ENCODE measurements at regions of chrX and their contacts with region 1.

Region 1: GRCh38 chrX:21166302-21166982 is 207.8 kb upstream of the CNKSR2 start:
- DNase-seq: no peak
- H3K4me3 ChIP-seq: no peak overlapping the region
- H3K27ac ChIP-seq: no peak overlapping the region
- H3K4me1 ChIP-seq: no peaks in the 10 kb centered on the region
- H3K27me3 ChIP-seq: no peaks in the 10 kb centered on the region
- CTCF ChIP-seq: no peak
- POLR2A ChIP-seq: no peak

Region 2: GRCh38 chrX:21276736-21277685 is 110.6 kb after region 1 on chrX:
- intact Hi-C with region 1: loop called (anchors 10 kb)
- DNase-seq: no peak
- H3K4me3 ChIP-seq: no peak overlapping the region
- H3K27ac ChIP-seq: no peak overlapping the region
- H3K4me1 ChIP-seq: no peaks in the 10 kb centered on the region
- H3K27me3 ChIP-seq: peaks cover 0 to 4% of the 10 kb centered on the region in 2 donors
- CTCF ChIP-seq: no peak
- POLR2A ChIP-seq: no peak

Measured in breast epithelium (tissue), 4 donors.